AG04449 (cell line): ENCODE measurements at regions of chr19 and their contacts with region 1.

Region 1: GRCh38 chr19:18224525-18225354 is 1.5 kb downstream of the PDE4C start:
- DNase-seq: peak; percentile 96
- H3K4me3 ChIP-seq: peak overlapping the region; percentile 62
- CTCF ChIP-seq: no peak

Region 2: GRCh38 chr19:18160971-18161635 is 63.6 kb before region 1 on chr19:
- CTCF ChIA-PET with region 1: no interaction called
- POLR2A ChIA-PET with region 1: no interaction called
- DNase-seq: no peak
- H3K4me3 ChIP-seq: peak overlapping the region; percentile 27
- CTCF ChIP-seq: peak; percentile 55

Region 3: DNA sequence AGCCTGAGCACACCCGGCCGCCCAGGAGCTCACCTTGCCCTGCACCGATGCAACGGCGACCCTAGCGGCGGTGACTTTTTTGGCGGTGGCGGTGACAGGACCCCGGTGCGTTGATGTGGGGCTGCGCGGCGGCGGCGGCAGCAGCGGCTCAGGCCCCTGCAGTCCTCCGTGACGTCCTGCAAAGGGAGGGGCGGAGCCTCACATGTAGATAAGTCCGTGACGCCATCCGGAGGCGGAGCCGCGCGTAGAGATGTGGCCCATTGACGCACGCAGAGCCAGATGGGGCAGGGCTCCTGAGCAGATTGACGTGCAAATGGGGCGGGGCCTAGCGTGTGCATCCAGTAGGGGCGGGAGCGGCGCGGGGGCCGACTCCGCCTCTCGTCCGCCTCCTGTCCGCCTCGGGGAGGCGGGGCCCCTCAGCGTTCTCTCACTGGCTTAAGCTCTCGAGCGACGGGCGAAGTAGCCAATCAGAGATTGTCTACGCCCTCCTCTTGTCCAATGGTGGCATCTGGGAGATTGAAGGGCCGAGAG is 20.8 kb before region 1 on chr19 and contains the start of gene RAB3A:
- CTCF ChIA-PET with region 1: interaction called, 12 read pairs
- POLR2A ChIA-PET with region 1: interaction called, 4 read pairs
- DNase-seq: peak; percentile 99
- H3K4me3 ChIP-seq: peak within 1 kb of the TSS; percentile 96
- CTCF ChIP-seq: no peak

Region 4: DNA sequence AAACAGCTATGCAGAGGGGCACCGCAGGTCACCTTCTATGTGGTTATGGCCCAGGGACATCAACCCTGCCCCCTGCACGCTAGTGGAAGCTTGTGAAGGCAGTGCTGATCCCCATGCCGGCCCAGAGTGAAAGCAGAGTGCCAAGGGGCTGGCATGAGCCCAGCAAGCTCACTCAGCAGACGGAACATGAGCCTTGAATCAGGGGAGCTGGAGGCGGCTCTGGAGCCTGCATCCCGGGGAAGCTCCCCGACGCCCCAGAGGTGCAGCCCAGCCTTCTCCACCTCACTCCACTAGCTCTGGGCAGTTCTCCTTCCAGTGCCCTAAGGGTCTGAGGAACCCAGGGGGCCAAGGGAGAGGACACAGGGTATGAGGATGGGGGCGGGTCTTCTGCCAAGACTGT is 232.2 kb after region 1 on chr19:
- CTCF ChIA-PET with region 1: no interaction called
- POLR2A ChIA-PET with region 1: no interaction called
- DNase-seq: no peak
- H3K4me3 ChIP-seq: no peak overlapping the region
- CTCF ChIP-seq: no peak